Activated T-helper 2 cell treated with anti-CD3 and anti-CD28 coated beads, Interferon-gamma antibody, Interleukin-2, Interleukin-4, amounts not matched to agents 10 μg/mL and 5 μg/mL and 100 μg/mL, durations not matched to agents 14 hours and 24 hours and 36 hours (primary cell): ENCODE measurements at regions of chr3 and their contacts with region 1.

Region 1: GRCh38 chr3:73086071-73086494 is 24.6 kb downstream of the EBLN2 start:
- DNase-seq: no peak
- H3K4me3 Mint-ChIP-seq: no peak overlapping the region
- H3K27ac Mint-ChIP-seq: no peak overlapping the region
- H3K4me1 Mint-ChIP-seq: peaks cover 8% of the 10 kb centered on the region
- H3K27me3 Mint-ChIP-seq: peaks cover 4% of the 10 kb centered on the region

Region 2: DNA sequence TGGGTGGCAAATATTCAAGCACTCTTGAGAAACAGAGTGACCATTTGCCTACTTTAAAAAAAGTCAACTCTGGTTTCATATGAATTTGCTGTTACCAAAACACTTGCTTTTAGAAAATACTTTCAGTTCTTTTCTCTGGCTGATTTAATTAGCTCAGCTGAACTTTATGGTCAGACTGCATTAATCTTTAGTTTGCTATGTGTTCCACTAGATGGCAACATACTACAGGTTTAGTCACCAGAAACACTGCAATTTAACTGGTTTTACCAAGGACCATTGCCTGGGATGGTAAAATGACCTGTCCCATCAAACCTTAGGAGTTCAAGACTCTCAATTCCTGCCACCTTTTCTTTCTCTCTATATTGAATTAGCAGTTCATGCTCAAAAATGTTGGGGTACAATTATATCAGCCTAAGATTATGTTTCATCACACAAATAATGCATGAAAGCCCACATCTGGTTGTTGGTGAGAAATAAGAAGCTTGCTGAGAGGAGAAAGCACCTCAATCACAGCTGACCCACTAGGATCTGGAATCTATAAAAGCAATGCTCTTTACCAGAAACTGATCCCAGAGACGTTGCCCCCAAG is 1375.1 kb before region 1 on chr3:
- intact Hi-C with region 1: loop called (anchors 10 kb)
- DNase-seq: no peak
- H3K4me3 Mint-ChIP-seq: no peak overlapping the region
- H3K27ac Mint-ChIP-seq: no peak overlapping the region
- H3K4me1 Mint-ChIP-seq: peaks cover 40% of the 10 kb centered on the region
- H3K27me3 Mint-ChIP-seq: no peaks in the 10 kb centered on the region

Region 3: GRCh38 chr3:72847751-72848702 is 238.1 kb before region 1 on chr3 and contains the start of gene SHQ1:
- intact Hi-C with region 1: loop called (anchors 1 kb)
- DNase-seq: peak; percentile 91
- H3K4me3 Mint-ChIP-seq: peak within 1 kb of the TSS; percentile 99
- H3K27ac Mint-ChIP-seq: peak within 1 kb of the TSS; percentile 77
- H3K4me1 Mint-ChIP-seq: peaks cover 54% of the 10 kb centered on the region
- H3K27me3 Mint-ChIP-seq: no peaks in the 10 kb centered on the region
- total RNA-seq, gene SHQ1: 29.0 and 31.2 TPM in 2 replicates

Region 4: DNA sequence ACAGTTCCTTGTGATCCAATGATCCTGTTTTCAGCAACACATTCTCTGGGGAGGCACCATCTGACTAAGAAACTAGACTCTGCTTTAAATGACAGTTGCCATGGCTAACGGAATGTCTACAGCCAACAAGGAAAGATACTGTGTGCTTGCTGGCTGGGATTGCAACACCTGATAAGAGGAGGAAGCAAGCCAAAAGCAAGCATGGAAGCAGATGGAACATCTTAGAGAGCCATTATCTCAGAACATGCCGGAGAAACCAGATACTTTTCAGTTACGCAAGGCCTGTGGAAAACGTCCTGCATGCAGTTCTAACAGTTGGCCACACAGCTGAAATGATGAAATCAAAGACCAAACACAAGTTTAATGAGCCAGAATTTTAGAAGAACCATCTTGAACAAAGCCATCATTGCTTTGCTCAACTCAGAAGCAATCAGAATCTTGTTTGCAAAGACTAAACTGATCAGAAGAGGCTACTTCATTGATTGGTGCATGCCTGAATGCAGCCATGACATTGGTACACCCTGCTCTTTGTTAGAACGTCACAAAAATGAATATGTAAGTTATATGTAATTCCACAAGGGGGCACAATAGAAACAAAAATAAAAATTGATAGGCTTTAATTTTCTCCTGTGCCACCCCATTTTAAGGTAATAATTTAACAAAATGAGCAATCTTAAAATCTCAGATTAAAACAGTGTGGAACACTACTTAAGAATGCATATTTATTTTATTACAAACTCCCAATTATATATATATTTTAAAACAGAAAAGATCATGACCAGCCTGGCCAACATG is 147.4 kb before region 1 on chr3:
- intact Hi-C with region 1: loop called (anchors 1 kb)
- DNase-seq: no peak
- H3K4me3 Mint-ChIP-seq: no peak overlapping the region
- H3K27ac Mint-ChIP-seq: no peak overlapping the region
- H3K4me1 Mint-ChIP-seq: no peaks in the 10 kb centered on the region
- H3K27me3 Mint-ChIP-seq: peaks cover 23% of the 10 kb centered on the region